Heart left ventricle (tissue), 16 donors: ENCODE measurements at regions of chr16 and their contacts with region 1.

Region 1: GRCh38 chr16:86751076-86752030 is 173.0 kb downstream of the FOXL1 start:
- DNase-seq: no peak
- ATAC-seq: no peak
- H3K4me3 ChIP-seq: no peak overlapping the region
- H3K27ac ChIP-seq: no peak overlapping the region
- H3K4me1 ChIP-seq: peaks cover 0 to 11% (median 0%) of the 10 kb centered on the region in 12 donors
- H3K27me3 ChIP-seq: peaks cover 0 to 3% (median 0%) of the 10 kb centered on the region in 9 donors
- CTCF ChIP-seq: no peak
- POLR2A ChIP-seq: no peak

Region 2: DNA sequence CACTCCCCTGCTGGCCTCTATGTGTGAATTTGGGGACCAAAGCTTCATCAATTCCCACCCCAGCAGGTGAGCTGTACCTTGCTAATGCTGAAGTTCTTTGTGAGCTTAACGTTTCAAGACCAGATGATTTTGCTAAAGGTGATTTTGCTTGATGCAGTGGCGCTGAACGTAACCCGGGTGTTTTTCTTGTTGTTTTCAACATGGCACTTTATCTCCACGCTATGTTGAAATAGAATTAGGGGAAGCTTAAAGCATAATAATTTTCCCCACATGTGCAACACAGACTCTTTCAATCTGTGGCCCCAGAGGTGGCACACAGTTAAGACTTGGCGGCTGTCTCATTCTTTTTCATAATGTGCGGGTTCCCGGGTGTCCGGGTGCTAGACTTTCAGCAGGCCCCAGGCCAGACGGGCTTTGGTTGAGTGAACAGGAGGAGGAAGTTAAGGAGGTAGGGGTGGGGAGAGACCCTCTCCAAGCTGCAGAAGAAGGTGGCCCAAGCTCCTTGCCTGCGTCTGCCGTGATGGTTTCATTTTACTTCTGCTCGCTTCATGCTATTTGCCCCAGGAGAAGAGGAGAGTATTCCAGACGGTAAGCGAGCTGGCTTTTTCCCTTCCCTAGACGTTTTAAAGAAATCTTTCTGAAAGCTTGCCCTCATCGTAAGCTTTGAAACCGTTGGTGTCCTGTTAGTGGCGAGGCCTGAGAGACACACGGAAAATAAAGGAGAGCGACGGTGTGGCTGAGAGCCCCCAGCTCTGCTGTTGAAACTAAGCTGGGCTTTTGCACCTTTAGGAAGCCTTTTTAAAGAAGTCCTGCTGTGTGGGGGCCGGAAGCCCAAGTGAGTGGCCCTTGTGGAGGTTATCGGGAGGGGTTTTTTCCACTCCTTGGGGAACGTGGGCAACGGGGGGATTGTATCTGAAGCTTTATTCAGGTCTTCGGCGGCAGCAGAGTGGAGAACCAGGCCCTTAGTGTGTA is 180.5 kb before region 1 on chr16:
- intact Hi-C with region 1: loop called in 7 of 10 experiments (anchors 5 to 10 kb)
- DNase-seq: no peak
- ATAC-seq: no peak
- H3K4me3 ChIP-seq: peak overlapping the region; percentile 14 to 83 (median 58)
- H3K27ac ChIP-seq: peak overlapping the region in 11 of 12 donors; percentile 11 to 89 (median 64)
- H3K4me1 ChIP-seq: peaks cover 0 to 44% (median 11%) of the 10 kb centered on the region in 12 donors
- H3K27me3 ChIP-seq: peaks cover 19 to 100% (median 71%) of the 10 kb centered on the region in 9 donors
- CTCF ChIP-seq: no peak
- POLR2A ChIP-seq: no peak

Region 3: DNA sequence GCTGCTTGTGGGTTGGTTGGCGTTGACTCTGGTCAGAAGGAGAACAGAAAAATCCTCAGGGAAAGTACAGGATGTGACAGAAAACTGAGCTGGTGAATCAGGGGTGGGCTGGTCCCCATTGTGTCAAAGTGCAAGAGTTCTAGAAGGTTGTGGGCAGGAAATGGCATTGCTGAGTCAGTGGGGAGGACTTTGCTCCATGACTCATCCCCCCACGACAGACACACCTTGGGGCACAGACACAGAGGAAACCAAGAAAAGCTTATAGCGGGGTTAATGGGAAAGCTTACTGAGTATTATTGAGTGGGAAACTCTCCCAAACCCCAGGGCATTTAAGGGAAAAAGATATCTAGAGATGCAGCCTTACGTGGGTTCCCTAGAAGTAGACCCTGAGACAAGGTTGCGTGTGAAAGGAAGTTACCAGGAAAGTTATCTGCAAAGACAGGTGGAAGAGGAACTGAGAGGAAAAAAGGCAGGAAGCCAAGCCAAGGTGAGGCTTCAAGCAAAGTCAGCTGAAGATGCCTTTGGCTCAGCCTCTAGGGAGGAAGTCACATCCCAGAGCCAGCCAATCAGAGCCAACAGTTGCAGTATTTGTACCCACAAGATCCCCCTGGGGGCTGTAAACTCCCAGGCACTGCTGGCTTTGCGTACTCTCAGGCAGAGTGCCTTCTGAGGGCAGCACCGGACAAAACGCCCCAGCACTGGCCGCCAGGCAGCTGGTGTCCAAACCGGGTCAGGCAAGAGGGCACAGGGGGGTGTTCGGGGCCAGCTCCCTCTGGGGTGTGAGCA is 86.6 kb before region 1 on chr16:
- intact Hi-C with region 1: loop called in 2 of 10 experiments (anchors 5 to 10 kb)
- DNase-seq: peak in 1 of 5 donors; percentile 61
- ATAC-seq: peak in 3 of 4 donors; percentile 28 to 50 (median 50)
- H3K4me3 ChIP-seq: no peak overlapping the region
- H3K27ac ChIP-seq: peak overlapping the region in 6 of 12 donors; percentile 22 to 63 (median 45)
- H3K4me1 ChIP-seq: peaks cover 0 to 46% (median 12%) of the 10 kb centered on the region in 12 donors
- H3K27me3 ChIP-seq: peaks cover 0 to 18% (median under 1%) of the 10 kb centered on the region in 9 donors
- CTCF ChIP-seq: no peak
- POLR2A ChIP-seq: no peak